Activated CD4-positive, alpha-beta memory T cell treated with anti-CD3 and anti-CD28 coated beads for 36 hours (primary cell): ENCODE measurements at regions of chr16 and their contacts with region 1.

Region 1: GRCh38 chr16:68328151-68328859 is 17.5 kb downstream of the PRMT7 start:
- DNase-seq: peak; percentile 86
- H3K4me3 Mint-ChIP-seq: no peak overlapping the region
- H3K27ac Mint-ChIP-seq: no peak overlapping the region
- H3K4me1 Mint-ChIP-seq: peaks cover 19% of the 10 kb centered on the region
- H3K27me3 Mint-ChIP-seq: no peaks in the 10 kb centered on the region

Region 2: DNA sequence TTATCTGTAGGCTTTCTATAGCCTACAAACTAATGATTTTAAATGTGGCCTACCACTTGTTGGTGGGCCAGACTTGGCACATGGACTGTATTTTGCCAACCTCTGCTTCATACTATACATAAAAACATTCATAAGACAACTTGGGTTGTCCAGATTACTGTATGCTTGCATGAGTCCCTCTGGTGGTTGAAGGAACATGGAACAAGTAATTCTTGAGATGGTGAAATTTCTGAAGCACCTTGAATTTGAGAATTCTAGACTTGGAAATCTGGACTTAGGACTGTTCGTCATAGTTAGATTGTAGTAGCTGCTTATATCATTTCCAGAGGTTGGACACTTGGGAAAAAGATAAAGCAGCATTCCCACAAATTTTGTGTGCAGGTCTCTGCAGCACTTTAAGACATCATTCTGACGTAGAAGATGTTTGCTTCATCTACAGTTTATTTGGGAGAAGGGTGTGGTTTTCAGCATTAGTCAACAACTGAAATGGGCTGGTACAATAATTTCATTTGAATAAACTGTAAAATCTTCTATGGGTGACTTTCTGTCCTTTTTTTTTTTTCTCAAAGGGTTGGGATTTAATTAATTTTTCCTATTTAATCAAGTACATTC is 211.9 kb before region 1 on chr16:
- CTCF ChIA-PET with region 1: no interaction called
- POLR2A ChIA-PET with region 1: no interaction called
- intact Hi-C with region 1: no loop called
- DNase-seq: no peak
- H3K4me3 Mint-ChIP-seq: no peak overlapping the region
- H3K27ac Mint-ChIP-seq: peak overlapping the region; percentile 33
- H3K4me1 Mint-ChIP-seq: peaks cover 85% of the 10 kb centered on the region
- H3K27me3 Mint-ChIP-seq: no peaks in the 10 kb centered on the region

Region 3: DNA sequence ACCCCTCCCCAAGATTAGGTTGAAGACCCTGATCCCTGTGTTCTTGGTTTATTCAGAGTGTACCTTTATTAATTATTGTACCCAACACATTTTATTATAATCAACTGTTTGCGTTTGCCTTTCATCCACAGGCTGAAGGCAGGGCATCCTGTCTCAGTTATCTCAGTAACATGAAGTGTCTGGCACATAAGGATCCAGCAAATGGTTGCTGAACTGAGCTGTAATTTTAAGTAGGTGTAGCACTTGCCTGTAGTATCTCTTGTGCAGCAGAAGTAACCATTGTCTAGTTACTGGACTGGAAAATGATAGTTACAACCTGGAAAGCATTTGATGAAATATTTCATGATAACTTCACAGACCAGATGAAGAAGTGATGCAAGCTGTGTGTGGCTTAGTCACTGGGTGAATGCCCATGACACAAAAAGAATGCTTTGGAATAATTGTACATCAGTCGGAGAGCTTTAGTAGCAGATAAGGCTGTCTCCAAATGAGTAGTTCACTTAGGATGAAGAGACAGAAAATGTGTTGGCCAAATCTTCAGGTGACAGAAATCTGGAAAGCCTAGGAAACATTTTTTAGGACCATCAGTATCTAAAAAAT is 149.0 kb before region 1 on chr16:
- CTCF ChIA-PET with region 1: no interaction called
- POLR2A ChIA-PET with region 1: no interaction called
- intact Hi-C with region 1: no loop called
- DNase-seq: no peak
- H3K4me3 Mint-ChIP-seq: no peak overlapping the region
- H3K27ac Mint-ChIP-seq: peak overlapping the region; percentile 47
- H3K4me1 Mint-ChIP-seq: peaks cover 23% of the 10 kb centered on the region
- H3K27me3 Mint-ChIP-seq: no peaks in the 10 kb centered on the region

Region 4: DNA sequence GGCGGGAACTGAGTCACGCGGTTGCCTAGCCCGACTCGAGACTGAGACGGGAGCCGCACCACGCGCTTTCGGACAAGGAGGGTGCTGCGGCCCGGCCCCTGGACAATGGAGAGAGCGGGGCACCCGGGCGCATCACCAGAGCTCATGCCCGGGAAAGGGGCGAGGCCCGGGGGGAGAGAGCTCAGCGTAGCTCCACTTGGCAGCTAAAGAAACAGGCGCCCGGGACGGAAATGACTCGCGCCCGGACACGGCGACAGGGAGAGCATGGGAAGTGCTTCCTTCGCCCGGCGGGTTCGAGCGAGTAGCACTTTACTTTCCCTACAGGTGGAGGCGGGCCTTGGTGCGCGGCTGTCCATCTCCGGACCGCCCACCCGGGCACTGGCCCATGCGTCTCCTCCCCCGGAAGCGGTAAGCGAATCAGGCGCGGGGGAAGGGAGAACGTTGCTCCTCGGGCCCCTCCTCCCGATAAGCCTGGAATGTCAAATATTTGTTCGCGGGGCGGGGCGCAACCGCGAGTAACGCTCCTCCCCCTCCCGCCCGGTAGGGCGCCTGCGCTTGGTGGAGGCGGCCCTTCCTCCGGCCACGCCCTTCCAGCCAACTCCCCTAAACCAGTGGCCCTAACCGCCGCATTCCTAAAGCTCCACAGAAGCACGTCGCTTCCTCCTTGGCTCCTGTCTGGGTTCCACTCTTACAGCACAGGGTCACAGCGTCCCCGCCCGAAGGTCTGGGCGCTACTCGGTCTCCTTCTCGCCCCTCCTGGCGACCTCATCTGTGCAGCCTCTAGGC is 90.9 kb before region 1 on chr16:
- CTCF ChIA-PET with region 1: interaction called, 47 read pairs
- POLR2A ChIA-PET with region 1: no interaction called
- intact Hi-C with region 1: no loop called
- DNase-seq: peak; percentile 95
- H3K4me3 Mint-ChIP-seq: peak overlapping the region; percentile 91
- H3K27ac Mint-ChIP-seq: peak overlapping the region; percentile 86
- H3K4me1 Mint-ChIP-seq: peaks cover 28% of the 10 kb centered on the region
- H3K27me3 Mint-ChIP-seq: no peaks in the 10 kb centered on the region

Region 5: DNA sequence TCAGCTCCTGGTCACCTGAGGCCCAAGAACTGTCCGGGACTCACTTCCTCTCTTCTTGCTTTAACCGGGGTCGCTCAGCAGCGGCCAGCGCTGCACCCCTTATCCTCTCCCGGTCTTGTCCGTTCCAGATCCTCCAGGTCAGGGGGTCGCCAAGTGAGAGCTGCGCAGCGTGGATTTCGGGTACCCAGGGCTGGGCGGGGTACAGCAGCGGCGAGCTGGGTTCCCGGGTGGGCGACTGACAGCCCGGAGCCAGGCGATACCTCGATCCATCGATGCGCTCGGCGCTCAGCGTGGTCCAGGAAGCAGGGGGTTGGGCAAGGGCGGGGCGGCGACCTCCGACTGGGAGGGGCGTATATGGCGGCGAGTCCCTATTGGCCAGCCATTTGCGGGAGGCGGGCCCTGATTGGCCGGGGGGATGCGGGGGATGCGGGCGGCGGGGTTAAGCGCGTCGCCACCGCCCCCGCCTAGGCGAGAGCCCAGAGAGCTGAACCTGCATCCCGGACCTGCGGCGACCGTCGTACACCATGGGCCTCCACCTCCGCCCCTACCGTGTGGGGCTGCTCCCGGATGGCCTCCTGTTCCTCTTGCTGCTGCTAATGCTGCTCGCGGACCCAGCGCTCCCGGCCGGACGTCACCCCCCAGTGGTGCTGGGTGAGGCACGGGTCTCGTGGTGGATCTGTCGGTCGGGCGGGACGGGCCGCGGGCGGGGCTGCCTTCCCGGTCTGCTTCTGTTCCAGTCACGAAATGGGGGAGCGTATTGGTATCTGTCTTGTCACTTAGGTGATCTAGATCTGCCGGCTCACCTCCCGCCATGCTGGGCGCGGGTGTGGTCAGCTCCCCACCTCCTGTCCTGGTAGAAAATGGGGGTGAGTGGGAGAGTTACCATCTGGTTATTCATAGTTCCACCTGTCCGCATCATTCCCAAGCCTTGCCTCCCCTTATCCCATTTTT is 83.1 kb before region 1 on chr16 and contains the start of gene PLA2G15:
- CTCF ChIA-PET with region 1: interaction called, 47 read pairs
- POLR2A ChIA-PET with region 1: interaction called, 3 read pairs
- intact Hi-C with region 1: no loop called
- DNase-seq: peak; percentile 98
- H3K4me3 Mint-ChIP-seq: peak within 1 kb of the TSS; percentile 89
- H3K27ac Mint-ChIP-seq: peak within 1 kb of the TSS; percentile 34
- H3K4me1 Mint-ChIP-seq: peaks cover 25% of the 10 kb centered on the region
- H3K27me3 Mint-ChIP-seq: no peaks in the 10 kb centered on the region
- total RNA-seq, gene PLA2G15: 8.0 to 8.7 TPM

Region 6: GRCh38 chr16:68289621-68290329 is 38.5 kb before region 1 on chr16:
- CTCF ChIA-PET with region 1: interaction called, 14 read pairs
- POLR2A ChIA-PET with region 1: no interaction called
- intact Hi-C with region 1: no loop called
- DNase-seq: peak; percentile 84
- H3K4me3 Mint-ChIP-seq: peak overlapping the region; percentile 12
- H3K27ac Mint-ChIP-seq: peak overlapping the region; percentile 93
- H3K4me1 Mint-ChIP-seq: peaks cover 84% of the 10 kb centered on the region
- H3K27me3 Mint-ChIP-seq: no peaks in the 10 kb centered on the region

Region 7: DNA sequence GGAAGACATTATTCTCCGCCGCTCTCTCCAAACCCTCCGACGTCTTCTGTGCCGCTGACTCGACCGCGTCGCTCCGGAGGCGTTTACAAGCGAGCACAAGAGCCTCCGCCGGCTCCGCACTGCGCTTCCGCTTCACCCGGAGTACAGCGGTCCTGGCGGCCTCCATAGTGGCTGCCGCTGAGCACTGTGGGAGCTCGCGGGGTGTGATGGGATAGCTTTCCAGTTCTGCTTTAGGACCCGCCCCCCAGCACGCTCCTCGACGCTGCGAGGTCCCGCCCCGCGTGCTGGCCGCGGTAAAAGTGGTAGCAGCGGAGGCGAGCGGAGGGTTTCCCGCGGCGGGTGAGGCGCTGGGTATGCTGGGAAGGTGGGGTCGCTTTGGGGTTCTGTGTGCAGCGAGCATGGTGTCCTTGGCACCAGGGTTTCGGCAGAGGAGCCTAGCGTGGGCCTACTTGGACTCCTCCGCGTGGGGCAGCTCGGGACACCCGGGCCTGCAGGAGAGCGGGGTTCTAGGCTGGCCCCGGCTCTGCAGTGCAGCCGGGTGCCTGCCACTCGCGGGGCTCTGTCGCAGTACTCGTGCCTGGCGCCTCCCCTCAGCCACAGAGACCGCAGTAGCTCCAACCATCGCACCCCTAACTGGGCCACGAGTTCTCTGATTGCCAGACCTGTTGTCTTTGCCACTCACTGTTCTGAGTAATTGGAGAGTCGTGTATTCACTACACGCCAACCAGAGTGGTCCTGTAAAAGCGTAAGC is 17.4 kb before region 1 on chr16 and contains the starts of genes PRMT7 and SLC7A6OS:
- CTCF ChIA-PET with region 1: interaction called, 20 read pairs
- POLR2A ChIA-PET with region 1: interaction called, 3 read pairs
- intact Hi-C with region 1: no loop called
- DNase-seq: peak; percentile 96
- H3K4me3 Mint-ChIP-seq: peak within 1 kb of the TSS; percentile 89
- H3K27ac Mint-ChIP-seq: peak within 1 kb of the TSS; percentile 93
- H3K4me1 Mint-ChIP-seq: peaks cover 52% of the 10 kb centered on the region
- H3K27me3 Mint-ChIP-seq: no peaks in the 10 kb centered on the region
- total RNA-seq, gene PRMT7: 60.4 to 62.8 TPM
- total RNA-seq, gene SLC7A6OS: 20.6 to 22.2 TPM

Region 8: DNA sequence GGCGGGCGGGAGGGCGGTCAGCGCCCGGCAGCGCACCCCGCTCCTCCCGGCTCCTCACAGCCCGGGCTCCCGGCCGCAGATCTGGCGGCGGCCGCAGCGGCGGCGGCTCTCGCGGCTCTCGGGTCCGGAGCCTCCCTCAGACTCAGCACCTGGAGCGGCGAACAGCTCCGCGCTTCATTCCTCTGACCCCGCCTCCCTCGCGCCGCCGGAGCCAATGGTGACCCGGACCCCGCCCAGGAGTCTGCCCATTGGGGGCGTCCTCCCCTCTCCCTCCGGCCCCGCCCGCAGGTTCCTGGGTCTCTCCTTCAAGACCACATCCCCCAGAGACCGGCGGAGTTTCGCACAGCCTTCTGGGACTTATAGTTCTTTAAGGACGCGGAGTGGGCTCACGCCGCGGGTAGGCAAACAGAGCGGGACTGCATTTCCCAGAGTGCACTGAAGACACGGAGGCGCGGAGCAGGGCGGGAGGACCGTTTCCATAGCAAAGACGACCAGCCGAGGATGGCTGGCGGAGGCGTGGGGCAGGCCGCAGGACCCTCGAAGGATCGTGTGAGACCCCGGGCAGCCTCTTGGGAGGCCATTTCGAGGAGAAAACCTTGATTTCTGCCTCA is 120.2 kb after region 1 on chr16 and contains the start of gene SMPD3:
- CTCF ChIA-PET with region 1: no interaction called
- POLR2A ChIA-PET with region 1: no interaction called
- intact Hi-C with region 1: no loop called
- DNase-seq: peak; percentile 99
- H3K4me3 Mint-ChIP-seq: peak within 1 kb of the TSS; percentile 73
- H3K27ac Mint-ChIP-seq: no peak within 1 kb of the TSS
- H3K4me1 Mint-ChIP-seq: peaks cover 20% of the 10 kb centered on the region
- H3K27me3 Mint-ChIP-seq: peaks cover 17% of the 10 kb centered on the region
- total RNA-seq, gene SMPD3: 0.07 to 0.12 TPM

Region 9: GRCh38 chr16:69417520-69418199 is 1089.4 kb after region 1 on chr16:
- CTCF ChIA-PET with region 1: no interaction called
- POLR2A ChIA-PET with region 1: no interaction called
- intact Hi-C with region 1: no loop called
- DNase-seq: no peak
- H3K4me3 Mint-ChIP-seq: no peak overlapping the region
- H3K27ac Mint-ChIP-seq: no peak overlapping the region
- H3K4me1 Mint-ChIP-seq: peaks cover 2% of the 10 kb centered on the region
- H3K27me3 Mint-ChIP-seq: no peaks in the 10 kb centered on the region